ENCODE measurements at regions of chr2 and their contacts with region 1.

Region 1: DNA sequence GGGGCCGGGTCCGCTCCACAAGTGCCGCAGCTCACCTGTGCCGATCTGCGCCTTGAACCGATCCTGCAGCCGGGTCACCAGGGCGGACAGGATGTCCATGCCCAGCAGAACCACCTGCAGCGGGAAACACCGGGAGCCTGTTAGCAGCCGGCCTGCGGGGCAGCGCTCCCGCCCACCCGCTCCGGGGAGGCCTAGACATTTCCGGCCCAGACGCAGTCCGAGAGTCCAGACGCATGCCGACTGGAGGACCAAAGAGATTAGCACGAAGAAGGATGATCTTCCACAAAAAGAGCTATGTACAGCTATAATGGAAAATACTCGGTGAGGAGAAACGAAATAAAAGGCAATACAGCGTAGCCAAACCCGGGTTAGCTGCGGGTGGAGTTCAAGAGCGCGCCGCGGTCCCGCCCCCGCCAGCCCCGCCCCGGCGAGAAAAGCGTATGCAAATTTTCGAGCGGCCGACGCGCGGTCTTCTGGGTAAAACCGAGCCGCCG is 421 bp upstream of the RNU4ATAC start:
- DNase-seq: no peak
- H3K4me3 ChIP-seq: peak overlapping the region; percentile 78
- CTCF ChIP-seq: no peak

Region 2: GRCh38 chr2:121400201-121400600 is 130.1 kb before region 1 on chr2:
- CTCF ChIA-PET with region 1: interaction called, 22 read pairs
- POLR2A ChIA-PET with region 1: interaction called, 10 read pairs
- DNase-seq: peak; percentile 31
- H3K4me3 ChIP-seq: no peak overlapping the region
- CTCF ChIP-seq: no peak

Region 3: DNA sequence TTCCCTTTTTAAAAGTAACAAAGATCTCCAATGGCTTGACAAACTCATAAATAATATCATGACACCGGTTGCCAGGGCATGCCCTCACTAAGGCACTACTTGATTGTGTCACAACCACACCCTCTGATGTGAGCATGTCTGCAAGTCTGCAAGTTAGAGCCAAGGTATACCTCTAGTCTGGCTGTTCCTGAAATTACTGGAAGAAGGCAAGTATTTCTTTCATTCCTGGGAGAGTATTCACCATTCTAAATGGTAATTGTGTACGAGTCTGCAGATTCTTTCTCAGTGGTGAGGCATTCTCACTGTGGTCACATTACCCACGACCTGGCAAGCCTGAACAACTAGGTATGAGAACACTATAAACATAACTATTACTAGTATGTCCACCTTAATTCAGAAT is 25.3 kb before region 1 on chr2:
- CTCF ChIA-PET with region 1: interaction called, 10 read pairs
- POLR2A ChIA-PET with region 1: interaction called, 6 read pairs
- DNase-seq: peak; percentile 82
- H3K4me3 ChIP-seq: no peak overlapping the region
- CTCF ChIP-seq: no peak

Region 4: DNA sequence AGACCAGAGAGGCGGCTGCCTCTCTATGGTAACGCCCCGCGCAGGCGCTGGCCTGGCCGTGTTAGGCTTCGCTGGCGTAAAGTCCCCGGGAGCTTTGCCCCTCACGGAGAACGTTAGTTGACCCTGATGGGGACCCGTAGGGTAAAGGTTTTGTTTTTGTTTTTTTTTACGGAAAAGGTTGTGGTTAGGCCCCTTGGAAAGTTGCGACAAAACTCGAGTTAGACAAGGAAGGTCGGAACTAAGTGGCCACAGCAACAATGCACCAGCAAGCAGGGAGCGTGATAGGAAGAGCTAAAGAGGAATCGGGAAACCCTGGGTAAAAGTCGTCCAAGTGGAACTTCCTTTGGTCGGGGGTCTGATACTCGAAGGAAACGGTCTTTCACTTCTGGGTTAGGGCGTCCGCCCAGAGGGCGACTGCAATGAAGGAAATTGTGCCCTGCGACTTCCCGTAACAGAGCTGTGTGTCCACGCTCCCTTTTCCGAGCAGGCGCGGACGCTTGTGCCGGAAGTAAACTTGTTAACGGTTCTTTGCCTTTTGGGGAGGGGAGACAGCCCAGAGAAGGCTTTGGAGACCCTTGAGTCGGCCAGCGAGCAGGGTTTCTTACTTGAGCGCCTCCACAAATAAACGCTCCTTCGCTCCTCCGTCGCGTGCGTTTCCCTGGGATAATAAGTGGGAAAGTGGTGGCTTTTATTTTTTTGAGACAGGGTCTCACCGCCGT is 119.5 kb after region 1 on chr2:
- CTCF ChIA-PET with region 1: interaction called, 13 read pairs
- POLR2A ChIA-PET with region 1: interaction called, 55 read pairs
- DNase-seq: peak; percentile 81
- H3K4me3 ChIP-seq: peak overlapping the region; percentile 88
- CTCF ChIP-seq: no peak

Region 5: GRCh38 chr2:121736462-121737341 is 206.4 kb after region 1 on chr2 and contains the start of gene NIFK:
- CTCF ChIA-PET with region 1: interaction called, 15 read pairs
- POLR2A ChIA-PET with region 1: interaction called, 16 read pairs
- DNase-seq: peak; percentile 66
- H3K4me3 ChIP-seq: peak within 1 kb of the TSS; percentile 89
- CTCF ChIP-seq: no peak

Measured in AG04449 (cell line).